ENCODE measurements at regions of chr10 and their contacts with region 1.

Region 1: DNA sequence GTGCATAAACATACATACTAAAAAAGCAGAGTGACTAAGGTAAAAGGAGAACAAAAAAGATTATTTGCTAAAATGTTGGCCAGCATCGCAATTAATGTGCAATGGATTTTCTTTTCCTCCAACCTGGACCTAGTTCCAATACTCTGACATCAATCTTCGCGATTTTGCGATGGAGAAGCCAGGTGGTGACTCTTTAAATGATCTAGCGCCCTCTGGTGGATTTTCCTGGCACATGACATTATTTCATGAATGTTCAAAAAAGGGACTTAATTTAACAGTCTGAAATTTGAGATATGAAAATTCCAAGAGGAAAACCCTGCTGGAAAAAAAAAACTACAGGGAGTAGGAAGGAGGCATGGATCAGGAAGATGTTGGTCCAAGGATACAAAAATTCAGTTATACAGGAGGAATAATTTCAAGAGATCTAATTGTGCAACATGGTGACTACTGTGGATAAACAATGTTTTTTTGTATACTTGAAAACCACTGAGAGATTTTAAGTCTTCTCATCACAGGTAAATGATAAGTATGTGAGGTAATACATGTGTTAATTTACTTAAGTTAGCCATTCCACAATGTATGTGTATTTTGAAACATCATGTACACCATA is 4.3 kb upstream of the KCNMA1 start:
- DNase-seq: no peak
- ATAC-seq: no peak

Region 2: GRCh38 chr10:77391605-77392235 is 250.2 kb before region 1 on chr10:
- intact Hi-C with region 1: loop called (anchors 1 kb)
- DNase-seq: no peak
- ATAC-seq: peak; percentile 74

Region 3: GRCh38 chr10:77494327-77494726 is 147.6 kb before region 1 on chr10:
- intact Hi-C with region 1: loop called (anchors 1 kb)
- DNase-seq: no peak
- ATAC-seq: no peak